Activated CD8-positive, alpha-beta memory T cell treated with anti-CD3 and anti-CD28 coated beads, Interleukin-2, amount 10 ng/mL, durations not matched to agents 7 days and 5 days (primary cell): ENCODE measurements at regions of chr17 and their contacts with region 1.

Region 1: DNA sequence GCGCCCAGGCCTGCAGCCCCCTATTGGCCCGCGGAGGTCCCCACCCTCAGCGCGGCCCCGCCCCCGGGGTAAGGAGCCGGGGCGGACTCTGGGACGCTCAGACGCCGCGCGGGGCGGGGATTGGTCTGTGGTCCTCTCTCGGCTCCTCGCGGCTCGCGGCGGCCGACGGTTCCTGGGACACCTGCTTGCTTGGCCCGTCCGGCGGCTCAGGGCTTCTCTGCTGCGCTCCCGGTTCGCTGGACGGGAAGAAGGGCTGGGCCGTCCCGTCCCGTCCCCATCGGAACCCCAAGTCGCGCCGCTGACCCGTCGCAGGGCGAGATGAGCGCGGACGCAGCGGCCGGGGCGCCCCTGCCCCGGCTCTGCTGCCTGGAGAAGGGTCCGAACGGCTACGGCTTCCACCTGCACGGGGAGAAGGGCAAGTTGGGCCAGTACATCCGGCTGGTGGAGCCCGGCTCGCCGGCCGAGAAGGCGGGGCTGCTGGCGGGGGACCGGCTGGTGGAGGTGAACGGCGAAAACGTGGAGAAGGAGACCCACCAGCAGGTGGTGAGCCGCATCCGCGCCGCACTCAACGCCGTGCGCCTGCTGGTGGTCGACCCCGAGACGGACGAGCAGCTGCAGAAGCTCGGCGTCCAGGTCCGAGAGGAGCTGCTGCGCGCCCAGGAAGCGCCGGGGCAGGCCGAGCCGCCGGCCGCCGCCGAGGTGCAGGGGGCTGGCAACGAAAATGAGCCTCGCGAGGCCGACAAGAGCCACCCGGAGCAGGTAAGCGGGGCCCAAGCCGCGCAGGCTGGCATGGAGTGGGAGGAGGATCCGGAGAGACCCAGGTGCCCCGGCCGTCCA is at the start of gene NHERF1:
- DNase-seq: peak; percentile 96
- ATAC-seq: peak; percentile 87
- H3K4me3 Mint-ChIP-seq: peak within 1 kb of the TSS; percentile 100
- H3K27ac Mint-ChIP-seq: peak within 1 kb of the TSS; percentile 85
- H3K4me1 Mint-ChIP-seq: peaks cover 54% of the 10 kb centered on the region
- H3K27me3 Mint-ChIP-seq: no peaks in the 10 kb centered on the region
- total RNA-seq, gene NHERF1: 284 to 377 TPM

Region 2: GRCh38 chr17:74566132-74566753 is 182.5 kb before region 1 on chr17:
- CTCF ChIA-PET with region 1: no interaction called
- DNase-seq: peak; percentile 53
- ATAC-seq: peak; percentile 45
- H3K4me3 Mint-ChIP-seq: no peak overlapping the region
- H3K27ac Mint-ChIP-seq: no peak overlapping the region
- H3K4me1 Mint-ChIP-seq: peaks cover 10% of the 10 kb centered on the region
- H3K27me3 Mint-ChIP-seq: peaks cover 43% of the 10 kb centered on the region

Region 3: GRCh38 chr17:74770498-74771318 is 22.0 kb after region 1 on chr17:
- CTCF ChIA-PET with region 1: interaction called, 206 read pairs
- DNase-seq: peak; percentile 81
- ATAC-seq: peak; percentile 78
- H3K4me3 Mint-ChIP-seq: no peak overlapping the region
- H3K27ac Mint-ChIP-seq: peak overlapping the region; percentile 67
- H3K4me1 Mint-ChIP-seq: peaks cover 28% of the 10 kb centered on the region
- H3K27me3 Mint-ChIP-seq: no peaks in the 10 kb centered on the region

Region 4: GRCh38 chr17:74776044-74776977 is 27.6 kb after region 1 on chr17 and contains the start of gene NAT9:
- CTCF ChIA-PET with region 1: interaction called, 206 read pairs
- DNase-seq: peak; percentile 98
- ATAC-seq: peak; percentile 85
- H3K4me3 Mint-ChIP-seq: peak within 1 kb of the TSS; percentile 99
- H3K27ac Mint-ChIP-seq: peak within 1 kb of the TSS; percentile 86
- H3K4me1 Mint-ChIP-seq: peaks cover 62% of the 10 kb centered on the region
- H3K27me3 Mint-ChIP-seq: no peaks in the 10 kb centered on the region
- total RNA-seq, gene NAT9: 34.1 to 34.5 TPM

Region 5: GRCh38 chr17:74798239-74798707 is 49.5 kb after region 1 on chr17:
- CTCF ChIA-PET with region 1: no interaction called
- DNase-seq: no peak
- ATAC-seq: no peak
- H3K4me3 Mint-ChIP-seq: no peak overlapping the region
- H3K27ac Mint-ChIP-seq: no peak overlapping the region
- H3K4me1 Mint-ChIP-seq: peaks cover 6% of the 10 kb centered on the region
- H3K27me3 Mint-ChIP-seq: no peaks in the 10 kb centered on the region